ENCODE measurements at regions of chr2 and their contacts with region 1.

Region 1: DNA sequence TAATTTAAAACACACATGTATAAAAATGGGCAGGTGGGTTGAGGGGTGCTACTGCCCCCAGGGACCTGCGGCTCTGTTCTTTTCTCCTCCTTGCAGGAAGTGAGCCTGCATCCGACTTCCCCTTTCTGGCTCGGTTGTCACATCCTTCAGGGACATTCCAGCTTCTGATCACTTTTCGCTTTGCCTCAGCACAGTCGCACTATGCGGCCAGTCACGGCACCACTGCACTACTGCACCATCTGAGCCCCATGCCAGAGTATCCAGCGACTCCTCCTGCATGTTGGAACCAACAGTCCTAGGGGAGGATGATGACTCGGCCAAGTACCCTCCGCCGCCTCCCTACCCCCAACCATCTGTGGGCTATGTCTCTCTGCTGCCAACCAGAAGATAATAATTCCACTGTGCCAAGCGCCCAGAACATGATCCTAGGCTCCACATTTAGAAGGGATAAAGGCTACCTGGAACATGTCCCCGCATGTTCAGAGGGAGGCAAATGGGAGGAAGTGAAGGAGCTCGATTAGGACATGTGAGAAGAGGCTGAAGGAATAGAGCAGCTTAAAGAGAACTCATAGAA is 17.6 kb downstream of the CDC42EP3 start:
- DNase-seq: no peak
- H3K4me3 ChIP-seq: no peak overlapping the region
- H3K27ac ChIP-seq: peak overlapping the region; percentile 60; the same call in 1 of the 2 replicates
- H3K4me1 ChIP-seq: peaks cover 44% of the 10 kb centered on the region
- H3K27me3 ChIP-seq: no peaks in the 10 kb centered on the region
- CTCF ChIP-seq: no peak

Region 2: GRCh38 chr2:37414470-37414949 is 239.4 kb before region 1 on chr2:
- CTCF ChIA-PET with region 1: interaction called, 17 read pairs
- POLR2A ChIA-PET with region 1: no interaction called
- intact Hi-C with region 1: no loop called
- DNase-seq: peak; percentile 5 to 65
- H3K4me3 ChIP-seq: no peak overlapping the region
- H3K27ac ChIP-seq: no peak overlapping the region
- H3K4me1 ChIP-seq: no peaks in the 10 kb centered on the region
- H3K27me3 ChIP-seq: no peaks in the 10 kb centered on the region
- CTCF ChIP-seq: peak; percentile 94

Region 3: GRCh38 chr2:37449761-37450296 is 204.1 kb before region 1 on chr2:
- CTCF ChIA-PET with region 1: no interaction called
- POLR2A ChIA-PET with region 1: interaction called, 16 read pairs
- intact Hi-C with region 1: no loop called
- DNase-seq: no peak
- H3K4me3 ChIP-seq: no peak overlapping the region
- H3K27ac ChIP-seq: no peak overlapping the region
- H3K4me1 ChIP-seq: no peaks in the 10 kb centered on the region
- H3K27me3 ChIP-seq: no peaks in the 10 kb centered on the region
- CTCF ChIP-seq: no peak

Region 4: GRCh38 chr2:37529830-37530415 is 124.0 kb before region 1 on chr2:
- CTCF ChIA-PET with region 1: no interaction called
- POLR2A ChIA-PET with region 1: no interaction called
- intact Hi-C with region 1: loop called (anchors 5 kb)
- DNase-seq: no peak
- H3K4me3 ChIP-seq: no peak overlapping the region
- H3K27ac ChIP-seq: no peak overlapping the region
- H3K4me1 ChIP-seq: no peaks in the 10 kb centered on the region
- H3K27me3 ChIP-seq: no peaks in the 10 kb centered on the region
- CTCF ChIP-seq: no peak

Region 5: GRCh38 chr2:37688771-37689468 is 35.0 kb after region 1 on chr2:
- CTCF ChIA-PET with region 1: no interaction called
- POLR2A ChIA-PET with region 1: interaction called, 17 read pairs
- intact Hi-C with region 1: no loop called
- DNase-seq: peak; percentile 76 to 97
- H3K4me3 ChIP-seq: peak overlapping the region; percentile 19; the same call in 1 of the 2 replicates
- H3K27ac ChIP-seq: peak overlapping the region; percentile 85
- H3K4me1 ChIP-seq: peaks cover 30% of the 10 kb centered on the region
- H3K27me3 ChIP-seq: no peaks in the 10 kb centered on the region
- CTCF ChIP-seq: no peak

Region 6: GRCh38 chr2:37827455-37827854 is 173.6 kb after region 1 on chr2:
- CTCF ChIA-PET with region 1: interaction called, 12 read pairs
- POLR2A ChIA-PET with region 1: no interaction called
- intact Hi-C with region 1: no loop called
- DNase-seq: no peak
- H3K4me3 ChIP-seq: no peak overlapping the region
- H3K27ac ChIP-seq: no peak overlapping the region
- H3K4me1 ChIP-seq: peaks cover 24% of the 10 kb centered on the region
- H3K27me3 ChIP-seq: no peaks in the 10 kb centered on the region
- CTCF ChIP-seq: no peak

Measured in PC-9 (cell line).